ENCODE measurements at regions of chr12 and their contacts with region 1.

Region 1: GRCh38 chr12:112937741-112938719 is at the start of gene OAS3:
- DNase-seq: peak; percentile 45
- ATAC-seq: peak; percentile 81
- H3K4me3 ChIP-seq: peak within 1 kb of the TSS; percentile 70
- H3K27ac ChIP-seq: peak within 1 kb of the TSS; percentile 67
- H3K4me1 ChIP-seq: peaks cover 8% of the 10 kb centered on the region
- H3K27me3 ChIP-seq: no peaks in the 10 kb centered on the region
- CTCF ChIP-seq: 0 out of 6 replicates have a peak, but pooled peaks of 1 of the 3 experiments have one; percentile 3
- EP300 ChIP-seq: no peak
- POLR2A ChIP-seq: peak; percentile 49; the same call in 1 of the 2 replicates
- RAD21 ChIP-seq: no peak
- polyA plus RNA-seq, gene OAS3: 5.1 to 5.9 TPM

Region 2: DNA sequence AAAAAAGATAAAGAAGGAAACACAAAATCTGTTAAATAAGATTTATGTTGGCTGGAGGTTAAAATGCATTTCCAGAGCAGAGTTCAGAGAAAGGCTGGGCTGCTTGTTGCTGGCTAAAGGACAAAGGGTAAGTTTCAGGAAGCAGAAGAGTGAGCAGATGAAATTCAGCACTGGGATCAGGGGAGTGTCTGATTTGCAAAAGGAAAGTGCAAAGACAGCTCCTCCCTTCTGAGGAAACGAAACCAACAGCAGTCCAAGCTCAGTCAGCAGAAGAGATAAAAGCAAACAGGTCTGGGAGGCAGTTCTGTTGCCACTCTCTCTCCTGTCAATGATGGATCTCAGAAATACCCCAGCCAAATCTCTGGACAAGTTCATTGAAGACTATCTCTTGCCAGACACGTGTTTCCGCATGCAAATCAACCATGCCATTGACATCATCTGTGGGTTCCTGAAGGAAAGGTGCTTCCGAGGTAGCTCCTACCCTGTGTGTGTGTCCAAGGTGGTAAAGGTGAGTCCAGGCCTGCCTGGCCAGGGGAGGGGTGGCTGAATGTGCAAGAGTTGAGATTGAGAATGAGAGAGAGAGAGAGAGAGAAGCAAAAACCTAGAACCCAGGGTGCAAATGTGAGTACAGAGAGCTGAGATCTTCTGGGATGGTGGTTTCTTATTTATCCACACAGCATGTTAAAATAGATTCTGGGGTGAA is 31.2 kb before region 1 on chr12 and contains the start of gene OAS1:
- CTCF ChIA-PET with region 1: interaction called, 16 read pairs
- POLR2A ChIA-PET with region 1: interaction called, 14 read pairs
- RAD21 ChIA-PET with region 1: interaction called, 19 read pairs
- SMC1A ChIA-PET with region 1: interaction called, 36 read pairs
- in situ Hi-C with region 1: no loop called
- intact Hi-C with region 1: loop called (anchors 1 kb)
- DNase-seq: peak; percentile 89
- ATAC-seq: peak; percentile 87
- H3K4me3 ChIP-seq: peak within 1 kb of the TSS; percentile 85
- H3K27ac ChIP-seq: peak within 1 kb of the TSS; percentile 93
- H3K4me1 ChIP-seq: peaks cover 22% of the 10 kb centered on the region
- H3K27me3 ChIP-seq: no peaks in the 10 kb centered on the region
- CTCF ChIP-seq: no peak
- EP300 ChIP-seq: no peak
- POLR2A ChIP-seq: peak; percentile 85
- RAD21 ChIP-seq: no peak
- polyA plus RNA-seq, gene OAS1: 88.9 to 117 TPM

Region 3: DNA sequence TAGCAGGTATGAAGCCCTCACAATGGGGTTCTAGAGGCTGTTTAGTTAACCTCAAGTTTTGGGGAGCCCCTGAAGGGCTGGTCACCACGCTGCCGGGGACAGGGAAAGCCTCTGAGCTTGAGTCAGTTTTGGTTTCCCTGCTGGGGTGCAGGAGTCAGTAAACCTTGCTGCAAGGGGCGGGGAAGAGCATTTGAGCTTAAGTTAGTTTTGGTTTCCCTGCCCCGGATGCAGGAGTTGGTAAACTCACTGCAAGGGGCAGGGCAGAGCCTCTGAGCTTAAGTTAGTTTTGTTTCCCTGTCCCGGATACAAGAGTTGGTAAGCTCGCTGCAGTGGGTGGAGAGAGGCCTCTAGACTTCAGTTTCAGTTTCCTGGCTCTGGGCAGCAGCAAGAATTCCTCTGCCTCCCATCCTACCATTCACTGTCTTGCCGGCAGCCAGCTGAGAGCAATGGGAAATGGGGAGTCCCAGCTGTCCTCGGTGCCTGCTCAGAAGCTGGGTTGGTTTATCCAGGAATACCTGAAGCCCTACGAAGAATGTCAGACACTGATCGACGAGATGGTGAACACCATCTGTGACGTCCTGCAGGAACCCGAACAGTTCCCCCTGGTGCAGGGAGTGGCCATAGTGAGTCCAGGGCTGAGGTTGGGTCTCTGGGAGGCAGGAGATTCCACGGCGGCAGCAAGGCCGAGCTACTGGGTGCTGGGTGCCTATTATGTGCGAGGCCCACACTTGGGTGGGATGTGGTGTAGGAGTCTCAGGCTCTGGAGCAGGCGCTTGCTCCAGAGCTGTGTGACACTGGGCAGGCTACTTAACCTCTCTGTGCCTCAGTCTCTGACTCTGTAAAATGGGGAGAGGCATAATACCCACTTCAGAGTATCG is 40.4 kb after region 1 on chr12 and contains the start of gene OAS2:
- CTCF ChIA-PET with region 1: interaction called, 8 read pairs
- POLR2A ChIA-PET with region 1: interaction called, 20 read pairs
- RAD21 ChIA-PET with region 1: interaction called, 10 read pairs
- SMC1A ChIA-PET with region 1: interaction called, 20 read pairs
- in situ Hi-C with region 1: no loop called
- intact Hi-C with region 1: loop called (anchors 1 kb)
- DNase-seq: peak; percentile 94
- ATAC-seq: peak; percentile 92
- H3K4me3 ChIP-seq: peak within 1 kb of the TSS; percentile 97
- H3K27ac ChIP-seq: peak within 1 kb of the TSS; percentile 100
- H3K4me1 ChIP-seq: peaks cover 13% of the 10 kb centered on the region
- H3K27me3 ChIP-seq: no peaks in the 10 kb centered on the region
- CTCF ChIP-seq: no peak
- EP300 ChIP-seq: peak in 1 of 2 experiments; percentile 11; a peak in 1 of 4 replicates
- POLR2A ChIP-seq: peak; percentile 88
- RAD21 ChIP-seq: no peak
- polyA plus RNA-seq, gene OAS2: 32.4 to 43.4 TPM

Measured in GM12878 (cell line).